Calu3 (cell line): ENCODE measurements at regions of chr4 and their contacts with region 1.

Region 1: DNA sequence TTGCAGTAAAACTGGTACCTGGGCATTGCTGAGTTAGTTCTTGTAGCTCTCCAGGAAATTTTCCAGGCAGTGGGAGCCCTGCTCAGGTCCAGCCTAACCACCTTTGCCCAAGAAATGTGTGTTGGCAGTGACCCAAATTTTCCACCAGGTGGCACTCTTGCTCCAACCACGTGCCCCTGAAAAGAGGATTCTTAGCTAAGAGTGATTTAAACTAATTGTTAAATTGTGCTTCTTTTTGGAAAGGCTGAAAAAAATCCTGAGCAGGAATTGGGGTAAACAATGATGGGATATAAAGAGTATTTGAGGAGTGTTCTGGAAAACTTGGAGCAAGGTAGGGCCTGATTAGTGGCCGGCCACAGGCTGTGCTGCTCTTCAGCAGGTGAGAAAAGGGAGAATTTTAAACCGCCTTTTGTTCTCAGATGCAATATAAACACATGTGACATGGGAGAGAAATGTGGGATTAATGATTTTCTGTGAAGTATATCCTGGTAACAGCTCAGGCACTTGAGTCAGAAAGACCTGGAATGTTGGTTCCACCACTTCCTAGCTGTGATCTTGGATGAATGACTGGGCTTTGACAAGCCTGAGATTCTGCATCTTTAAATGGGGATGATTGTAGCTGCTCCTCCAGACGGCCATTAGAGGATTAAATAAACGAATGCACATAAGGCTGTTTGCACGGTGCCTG is 219.6 kb downstream of the PTTG2 start:
- DNase-seq: peak; percentile 73
- H3K4me3 Mint-ChIP-seq: peak overlapping the region; percentile 4
- H3K27ac Mint-ChIP-seq: peak overlapping the region; percentile 88
- H3K4me1 Mint-ChIP-seq: peaks cover 34% of the 10 kb centered on the region
- H3K27me3 Mint-ChIP-seq: no peaks in the 10 kb centered on the region
- CTCF ChIP-seq: peak; percentile 70

Region 2: DNA sequence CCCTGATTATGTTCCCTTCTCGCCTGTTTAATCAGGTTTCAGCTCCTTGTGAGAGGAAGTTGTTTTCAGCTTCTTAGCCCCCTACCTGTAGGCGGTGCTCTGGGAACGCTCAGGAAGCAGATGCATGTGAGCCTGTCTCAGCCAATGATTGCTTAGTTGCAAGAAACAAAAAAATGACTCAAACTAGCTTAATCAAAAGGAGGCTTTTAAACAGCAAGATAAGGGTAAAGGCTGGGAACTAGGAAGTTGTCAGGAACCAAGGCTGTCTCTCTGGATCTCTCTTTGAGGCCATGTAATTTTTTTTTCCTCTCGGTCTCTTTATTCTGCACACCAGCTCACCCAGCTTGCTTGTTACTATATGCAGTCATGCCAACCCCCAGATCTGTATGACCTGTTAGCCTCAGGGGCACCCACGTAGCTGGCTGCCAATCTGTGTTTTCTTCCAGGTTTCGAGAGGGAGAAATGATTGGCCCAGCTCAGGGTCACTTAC is 110.5 kb before region 1 on chr4:
- CTCF ChIA-PET with region 1: interaction called, 22 read pairs
- intact Hi-C with region 1: loop called (anchors 2 kb)
- DNase-seq: peak; percentile 64
- H3K4me3 Mint-ChIP-seq: no peak overlapping the region
- H3K27ac Mint-ChIP-seq: no peak overlapping the region
- H3K4me1 Mint-ChIP-seq: peaks cover 8% of the 10 kb centered on the region
- H3K27me3 Mint-ChIP-seq: no peaks in the 10 kb centered on the region
- CTCF ChIP-seq: peak; percentile 28

Region 3: GRCh38 chr4:38310446-38311043 is 130.7 kb after region 1 on chr4:
- CTCF ChIA-PET with region 1: interaction called, 8 read pairs
- intact Hi-C with region 1: loop called (anchors 2 kb)
- DNase-seq: no peak
- H3K4me3 Mint-ChIP-seq: peak overlapping the region; percentile 17
- H3K27ac Mint-ChIP-seq: peak overlapping the region; percentile 92
- H3K4me1 Mint-ChIP-seq: peaks cover 65% of the 10 kb centered on the region
- H3K27me3 Mint-ChIP-seq: no peaks in the 10 kb centered on the region
- CTCF ChIP-seq: no peak

Region 4: DNA sequence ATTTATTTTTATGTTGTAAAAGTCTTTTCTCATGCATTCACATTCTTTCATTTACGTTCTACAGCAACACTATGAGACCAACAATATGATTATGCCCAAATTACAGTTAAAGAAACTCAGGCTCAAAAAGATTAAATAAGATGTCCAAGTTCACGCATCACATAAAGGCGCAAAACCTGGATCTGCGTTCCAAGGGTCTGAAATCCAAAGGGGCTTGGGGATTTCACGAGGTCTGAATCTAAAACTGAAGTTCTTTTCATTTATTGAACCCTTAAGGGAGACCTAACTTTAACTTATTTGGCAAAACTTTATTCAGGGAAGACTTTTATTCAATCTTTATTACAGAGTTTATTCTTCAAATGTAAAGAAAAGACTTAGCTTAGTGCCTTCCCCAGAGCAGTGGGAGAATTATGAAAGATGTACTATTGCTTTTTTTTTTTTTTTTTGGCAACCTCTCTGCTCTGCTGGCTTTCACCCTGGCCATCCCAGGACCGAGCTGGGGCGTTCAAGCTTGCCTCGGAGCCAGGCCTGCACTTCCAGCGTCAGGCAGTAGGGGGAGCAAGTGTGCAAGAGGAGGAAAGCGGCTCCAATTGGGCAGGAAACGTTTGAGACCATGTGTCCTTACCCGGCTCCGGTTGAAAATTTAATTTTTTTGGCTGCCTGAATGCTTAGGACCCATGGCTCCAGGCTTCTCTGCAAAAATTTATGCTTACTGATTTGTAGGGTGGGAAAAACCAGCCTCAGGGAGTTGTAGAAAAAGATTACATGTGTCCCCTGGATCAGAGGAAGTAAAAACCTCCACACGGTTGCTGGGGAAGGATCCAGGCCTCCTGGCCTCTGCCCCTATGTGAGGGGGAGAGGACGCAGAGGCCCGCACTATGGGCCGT is 139.9 kb after region 1 on chr4:
- CTCF ChIA-PET with region 1: interaction called, 24 read pairs
- intact Hi-C with region 1: loop called (anchors 2 kb)
- DNase-seq: peak; percentile 92
- H3K4me3 Mint-ChIP-seq: no peak overlapping the region
- H3K27ac Mint-ChIP-seq: peak overlapping the region; percentile 77
- H3K4me1 Mint-ChIP-seq: peaks cover 51% of the 10 kb centered on the region
- H3K27me3 Mint-ChIP-seq: no peaks in the 10 kb centered on the region
- CTCF ChIP-seq: peak; percentile 85

Region 5: DNA sequence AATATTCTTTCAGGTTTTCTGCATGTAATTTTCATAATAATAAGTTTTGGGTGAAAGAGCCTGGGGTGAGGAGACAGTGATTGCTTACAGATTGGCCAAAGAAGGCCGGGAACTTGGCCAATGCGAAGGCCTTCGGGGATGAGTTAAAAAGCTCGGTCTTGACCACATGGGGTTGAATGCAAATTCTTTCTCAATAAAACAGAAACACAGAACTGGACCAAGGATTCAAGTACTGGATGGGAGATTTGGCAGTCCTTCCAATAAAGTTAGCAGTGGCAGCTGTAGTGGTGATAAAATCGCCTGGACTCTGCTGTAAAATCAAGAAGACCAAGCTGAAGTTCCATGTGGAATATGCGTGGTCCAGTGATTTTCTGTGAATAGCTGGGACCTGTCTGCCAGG is 202.0 kb after region 1 on chr4:
- CTCF ChIA-PET with region 1: interaction called, 5 read pairs
- intact Hi-C with region 1: loop called (anchors 5 kb)
- DNase-seq: no peak
- H3K4me3 Mint-ChIP-seq: no peak overlapping the region
- H3K27ac Mint-ChIP-seq: no peak overlapping the region
- H3K4me1 Mint-ChIP-seq: peaks cover 9% of the 10 kb centered on the region
- H3K27me3 Mint-ChIP-seq: no peaks in the 10 kb centered on the region
- CTCF ChIP-seq: no peak

Region 6: GRCh38 chr4:38612646-38613414 is 433.0 kb after region 1 on chr4:
- CTCF ChIA-PET with region 1: no interaction called
- intact Hi-C with region 1: loop called (anchors 5 kb)
- DNase-seq: no peak
- H3K4me3 Mint-ChIP-seq: no peak overlapping the region
- H3K27ac Mint-ChIP-seq: no peak overlapping the region
- H3K4me1 Mint-ChIP-seq: peaks cover 34% of the 10 kb centered on the region
- H3K27me3 Mint-ChIP-seq: no peaks in the 10 kb centered on the region
- CTCF ChIP-seq: no peak

Region 7: DNA sequence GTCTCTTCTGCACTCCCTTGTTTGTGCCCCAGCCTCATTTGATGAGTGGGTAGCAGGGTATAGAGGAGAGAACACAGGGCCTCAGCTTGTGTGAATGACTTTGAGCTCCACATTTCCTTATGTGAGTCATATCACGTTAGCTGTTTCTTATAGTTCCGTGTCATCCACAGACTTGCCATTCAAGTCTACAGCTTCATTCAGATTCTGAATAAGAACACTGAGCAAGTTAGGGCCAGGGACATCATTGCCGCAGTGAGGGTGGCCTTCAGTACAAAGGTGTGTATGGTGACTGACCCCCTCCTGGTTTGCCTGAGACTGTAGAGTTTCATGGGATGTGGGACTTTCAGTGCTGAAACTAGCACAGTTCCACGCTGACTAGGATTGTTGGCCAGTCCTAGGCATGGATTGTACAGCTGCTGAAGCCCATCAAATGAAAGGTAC is 507.8 kb after region 1 on chr4:
- CTCF ChIA-PET with region 1: interaction called, 13 read pairs
- intact Hi-C with region 1: no loop called
- DNase-seq: peak; percentile 30
- H3K4me3 Mint-ChIP-seq: no peak overlapping the region
- H3K27ac Mint-ChIP-seq: peak overlapping the region; percentile 53
- H3K4me1 Mint-ChIP-seq: peaks cover 14% of the 10 kb centered on the region
- H3K27me3 Mint-ChIP-seq: no peaks in the 10 kb centered on the region
- CTCF ChIP-seq: no peak